HepG2 (cell line): ENCODE measurements at regions of chr5 and their contacts with region 1.

Region 1: DNA sequence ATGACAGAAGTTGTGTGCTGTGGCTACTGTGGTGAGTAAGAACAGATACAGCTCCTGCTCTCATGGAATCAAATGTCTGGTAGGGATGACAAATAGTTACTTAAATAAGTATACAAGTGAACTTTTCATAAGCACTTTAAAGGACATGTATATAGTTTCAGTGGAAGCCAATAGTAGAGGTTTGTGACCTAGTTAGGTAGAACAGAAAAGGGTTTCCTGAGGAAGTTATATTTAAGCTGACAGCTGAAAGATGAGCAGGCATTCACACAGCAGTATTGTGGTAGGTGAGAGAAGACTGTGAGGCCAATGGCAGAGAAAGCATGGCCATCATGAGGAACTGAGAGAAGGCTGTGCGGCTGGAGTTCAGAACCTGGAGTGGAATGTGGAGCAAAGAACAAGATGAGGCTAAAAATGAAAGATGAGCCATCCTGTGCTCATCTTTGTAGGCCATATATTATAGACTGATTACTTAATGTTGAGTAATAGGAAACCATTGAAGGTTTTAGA is 15.4 kb downstream of the FAM174A start:
- DNase-seq: no peak
- ATAC-seq: no peak
- H3K4me3 ChIP-seq: no peak overlapping the region
- H3K27ac ChIP-seq: no peak overlapping the region
- H3K4me1 ChIP-seq: no peaks in the 10 kb centered on the region
- H3K27me3 ChIP-seq: no peaks in the 10 kb centered on the region
- CTCF ChIP-seq: no peak
- EP300 ChIP-seq: no peak
- POLR2A ChIP-seq: no peak
- RAD21 ChIP-seq: no peak

Region 2: GRCh38 chr5:100590867-100591266 is 40.3 kb after region 1 on chr5:
- CTCF ChIA-PET with region 1: no interaction called
- POLR2A ChIA-PET with region 1: no interaction called
- in situ Hi-C with region 1: no loop called
- intact Hi-C with region 1: loop called (anchors 1 kb)
- DNase-seq: no peak
- ATAC-seq: no peak
- H3K4me3 ChIP-seq: no peak overlapping the region
- H3K27ac ChIP-seq: no peak overlapping the region
- H3K4me1 ChIP-seq: peaks cover 4% of the 10 kb centered on the region; the same call in 1 of the 2 replicates
- H3K27me3 ChIP-seq: no peaks in the 10 kb centered on the region
- CTCF ChIP-seq: no peak
- EP300 ChIP-seq: no peak
- POLR2A ChIP-seq: no peak
- RAD21 ChIP-seq: no peak